ENCODE measurements at regions of chr2 and their contacts with region 1.

Region 1: DNA sequence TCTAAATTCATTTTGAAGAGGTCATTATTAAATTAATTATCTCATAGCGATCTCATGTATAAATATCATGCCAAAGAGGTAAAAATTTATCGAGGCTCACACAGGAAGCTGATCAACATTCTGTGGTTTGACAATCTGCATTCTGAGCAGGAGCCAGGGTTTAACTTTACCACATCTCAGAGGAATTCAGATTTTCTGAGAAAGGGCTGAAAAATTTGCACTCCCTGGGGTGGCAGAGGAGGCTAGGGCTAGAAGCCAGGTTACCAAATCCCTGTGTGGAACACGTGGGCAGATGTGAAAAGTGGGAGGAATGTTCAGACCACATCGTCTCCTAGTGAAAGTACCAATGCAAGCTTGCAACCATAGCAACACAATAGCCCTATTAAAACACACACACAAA is 63.5 kb upstream of the CTLA4 start:
- DNase-seq: peak; percentile 63
- ATAC-seq: peak; percentile 30
- H3K4me3 Mint-ChIP-seq: peak overlapping the region; percentile 17
- H3K27ac Mint-ChIP-seq: peak overlapping the region; percentile 82
- H3K4me1 Mint-ChIP-seq: peaks cover 86% of the 10 kb centered on the region
- H3K27me3 Mint-ChIP-seq: no peaks in the 10 kb centered on the region

Region 2: DNA sequence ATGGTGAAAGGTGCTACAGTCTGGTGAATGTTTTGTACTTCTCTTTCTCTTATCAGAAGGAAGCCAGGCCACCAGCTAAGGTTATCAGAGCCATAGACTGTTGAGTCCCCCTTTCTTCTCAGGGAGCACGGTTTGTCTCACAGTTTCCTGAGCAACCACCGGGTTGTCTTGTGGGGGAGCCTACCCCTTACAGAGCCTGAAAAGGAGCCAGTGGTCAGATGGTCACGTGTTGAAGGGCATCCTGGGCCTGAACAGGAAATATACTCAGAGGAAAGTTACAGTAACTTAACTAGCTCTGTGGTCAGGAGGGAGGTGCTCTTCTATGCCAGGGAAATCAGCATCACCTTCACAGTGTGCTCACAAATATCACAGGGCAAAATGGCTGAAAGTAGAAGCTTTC is 86.0 kb before region 1 on chr2:
- CTCF ChIA-PET with region 1: interaction called, 13 read pairs
- POLR2A ChIA-PET with region 1: interaction called, 4 read pairs
- intact Hi-C with region 1: no loop called
- DNase-seq: peak; percentile 77
- ATAC-seq: peak; percentile 63
- H3K4me3 Mint-ChIP-seq: peak overlapping the region; percentile 63
- H3K27ac Mint-ChIP-seq: peak overlapping the region; percentile 95
- H3K4me1 Mint-ChIP-seq: peaks cover 97% of the 10 kb centered on the region
- H3K27me3 Mint-ChIP-seq: no peaks in the 10 kb centered on the region

Region 3: GRCh38 chr2:203782262-203782976 is 21.7 kb before region 1 on chr2:
- CTCF ChIA-PET with region 1: interaction called, 19 read pairs
- POLR2A ChIA-PET with region 1: no interaction called
- intact Hi-C with region 1: loop called in 1 of 2 experiments (anchors 2 kb)
- DNase-seq: peak; percentile 81
- ATAC-seq: peak; percentile 94
- H3K4me3 Mint-ChIP-seq: no peak overlapping the region
- H3K27ac Mint-ChIP-seq: peak overlapping the region; percentile 89
- H3K4me1 Mint-ChIP-seq: peaks cover 52% of the 10 kb centered on the region
- H3K27me3 Mint-ChIP-seq: no peaks in the 10 kb centered on the region

Measured in activated CD4-positive, alpha-beta T cell treated with anti-CD3 and anti-CD28 coated beads for 36 hours (primary cell).